Calu3 (cell line): ENCODE measurements at regions of chr4 and their contacts with region 1.

Region 1: GRCh38 chr4:173990126-173990868 is 293.2 kb downstream of the FBXO8 start:
- DNase-seq: peak; percentile 4
- H3K4me3 Mint-ChIP-seq: no peak overlapping the region
- H3K27ac Mint-ChIP-seq: no peak overlapping the region
- H3K4me1 Mint-ChIP-seq: no peaks in the 10 kb centered on the region
- H3K27me3 Mint-ChIP-seq: no peaks in the 10 kb centered on the region
- CTCF ChIP-seq: no peak

Region 2: DNA sequence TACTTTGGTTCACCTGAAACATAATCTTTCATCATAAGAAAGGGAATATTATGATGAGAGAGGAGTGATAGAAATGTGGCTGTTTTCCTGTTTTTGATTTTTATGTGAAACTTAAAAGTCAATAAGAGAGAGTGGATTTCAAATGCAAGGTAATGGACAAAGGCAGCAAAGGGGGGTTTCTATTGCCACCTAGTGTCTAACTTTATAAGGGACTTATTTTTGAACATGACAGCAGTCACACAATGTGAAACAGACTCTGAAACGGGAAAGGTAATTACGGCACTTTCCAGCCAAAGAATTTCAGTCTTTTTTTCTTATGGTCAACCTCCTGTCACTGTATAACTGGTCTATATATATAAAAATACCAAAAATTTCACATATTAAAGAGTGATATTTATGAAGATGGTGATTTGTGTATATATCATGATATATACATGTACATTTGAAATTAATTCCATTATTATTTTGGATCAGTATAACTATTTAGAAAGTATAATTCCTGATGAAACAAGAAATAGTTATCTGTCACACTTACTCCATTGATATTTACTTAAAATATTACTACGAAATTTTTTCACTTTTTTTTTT is 166.0 kb after region 1 on chr4:
- CTCF ChIA-PET with region 1: no interaction called
- intact Hi-C with region 1: loop called (anchors 5 kb)
- DNase-seq: peak; percentile 2
- H3K4me3 Mint-ChIP-seq: no peak overlapping the region
- H3K27ac Mint-ChIP-seq: no peak overlapping the region
- H3K4me1 Mint-ChIP-seq: no peaks in the 10 kb centered on the region
- H3K27me3 Mint-ChIP-seq: no peaks in the 10 kb centered on the region
- CTCF ChIP-seq: no peak